Transverse colon (tissue), 4 donors: ENCODE measurements at regions of chr13 and their contacts with region 1.

Region 1: GRCh38 chr13:96025283-96025682 is 27.9 kb downstream of the UGGT2 start:
- DNase-seq: no peak
- H3K4me3 ChIP-seq: no peak overlapping the region
- H3K27ac ChIP-seq: no peak overlapping the region
- H3K4me1 ChIP-seq: peaks cover 0 to 13% (median 9%) of the 10 kb centered on the region in 4 donors
- H3K27me3 ChIP-seq: no peaks in the 10 kb centered on the region
- CTCF ChIP-seq: no peak
- EP300 ChIP-seq: no peak
- POLR2A ChIP-seq: no peak

Region 2: DNA sequence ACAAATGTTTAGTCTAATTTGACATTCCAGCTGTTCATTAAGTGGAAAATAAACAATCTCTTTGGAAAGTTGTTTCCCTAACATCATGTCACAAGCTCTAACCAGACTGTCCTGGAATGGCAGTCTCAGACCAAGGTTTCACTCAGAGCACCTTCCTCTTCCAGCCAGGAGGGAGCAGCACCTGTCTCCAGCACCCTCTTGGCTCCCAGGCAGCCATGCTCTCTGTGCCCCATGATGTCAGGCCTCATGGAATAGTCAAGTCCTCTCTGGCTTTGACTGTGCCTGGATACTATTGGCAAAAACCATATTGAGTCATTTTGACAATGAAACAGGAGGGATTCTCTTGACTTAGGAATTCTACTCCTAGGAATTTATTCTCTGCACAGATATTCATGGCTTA is 797.6 kb after region 1 on chr13:
- in situ Hi-C with region 1: loop called in 1 of 4 experiments (anchors 25 kb)
- intact Hi-C with region 1: no loop called
- DNase-seq: peak; percentile 25
- H3K4me3 ChIP-seq: no peak overlapping the region
- H3K27ac ChIP-seq: no peak overlapping the region
- H3K4me1 ChIP-seq: no peaks in the 10 kb centered on the region
- H3K27me3 ChIP-seq: no peaks in the 10 kb centered on the region
- CTCF ChIP-seq: peak; percentile 21 to 66 (median 41)
- EP300 ChIP-seq: no peak
- POLR2A ChIP-seq: no peak